ENCODE measurements at regions of chr10 and their contacts with region 1.

Region 1: GRCh38 chr10:103192451-103193106 is 493 bp downstream of the NT5C2 start:
- DNase-seq: peak; percentile 93 to 94
- ATAC-seq: peak; percentile 85
- H3K4me3 ChIP-seq: peak overlapping the region; percentile 80 to 93
- H3K27ac ChIP-seq: peak overlapping the region; percentile 98
- H3K4me1 ChIP-seq: peaks cover 0 to 2% of the 10 kb centered on the region in 2 donors
- H3K27me3 ChIP-seq: no peaks in the 10 kb centered on the region

Region 2: DNA sequence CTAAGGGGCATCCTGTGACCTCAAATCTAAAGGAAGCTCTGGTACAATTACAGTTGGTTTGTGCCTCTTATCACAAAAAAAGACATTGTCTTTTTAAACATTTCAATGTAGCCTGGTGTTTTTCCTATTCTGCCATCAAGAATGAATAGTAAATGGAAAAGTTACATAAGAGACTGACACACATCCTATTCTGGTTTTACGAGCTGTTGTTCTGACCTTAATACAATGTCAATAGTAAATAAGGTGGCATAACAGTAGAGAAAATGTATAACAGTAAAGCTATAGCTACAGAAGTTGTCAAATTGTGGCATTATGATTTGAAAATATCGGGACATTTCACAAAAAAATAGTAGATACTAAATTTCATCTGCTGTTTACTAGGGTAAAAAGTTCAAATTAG is 87.9 kb before region 1 on chr10:
- intact Hi-C with region 1: loop called in 1 of 2 experiments (anchors 5 kb)
- DNase-seq: no peak
- ATAC-seq: no peak
- H3K4me3 ChIP-seq: no peak overlapping the region
- H3K27ac ChIP-seq: no peak overlapping the region
- H3K4me1 ChIP-seq: no peaks in the 10 kb centered on the region
- H3K27me3 ChIP-seq: no peaks in the 10 kb centered on the region

Region 3: DNA sequence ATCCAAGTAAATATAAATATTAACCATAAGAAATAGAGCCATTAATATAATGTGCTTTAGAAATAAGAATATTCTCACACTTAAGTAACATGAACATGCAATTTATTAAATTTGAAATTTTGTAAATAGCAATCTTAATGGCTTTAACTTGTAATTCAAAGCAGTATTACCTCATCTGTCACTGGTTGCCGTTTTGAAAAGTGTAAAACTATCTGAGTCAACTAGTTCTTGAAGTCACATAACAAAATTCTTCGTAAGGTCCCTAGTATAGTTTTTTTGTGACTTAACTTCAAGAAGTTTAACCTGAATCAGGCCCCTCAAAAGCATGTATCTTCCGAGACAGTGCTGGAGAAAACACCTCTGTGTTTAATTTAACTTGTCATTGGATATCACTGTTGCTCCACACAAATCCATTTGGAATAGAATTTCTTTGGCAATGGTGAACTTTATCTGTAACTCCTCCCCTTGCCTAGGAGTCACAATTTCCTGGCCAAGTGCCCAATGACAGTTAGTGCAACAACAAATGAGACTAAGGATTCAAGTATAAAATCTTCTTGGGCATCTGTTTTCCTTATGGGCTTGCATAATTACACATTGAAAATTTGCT is 46.6 kb before region 1 on chr10:
- intact Hi-C with region 1: loop called in 1 of 2 experiments (anchors 5 kb)
- DNase-seq: peak; percentile 72 to 81
- ATAC-seq: peak; percentile 71
- H3K4me3 ChIP-seq: no peak overlapping the region
- H3K27ac ChIP-seq: no peak overlapping the region
- H3K4me1 ChIP-seq: peaks cover 5 to 7% of the 10 kb centered on the region in 2 donors
- H3K27me3 ChIP-seq: no peaks in the 10 kb centered on the region

Region 4: DNA sequence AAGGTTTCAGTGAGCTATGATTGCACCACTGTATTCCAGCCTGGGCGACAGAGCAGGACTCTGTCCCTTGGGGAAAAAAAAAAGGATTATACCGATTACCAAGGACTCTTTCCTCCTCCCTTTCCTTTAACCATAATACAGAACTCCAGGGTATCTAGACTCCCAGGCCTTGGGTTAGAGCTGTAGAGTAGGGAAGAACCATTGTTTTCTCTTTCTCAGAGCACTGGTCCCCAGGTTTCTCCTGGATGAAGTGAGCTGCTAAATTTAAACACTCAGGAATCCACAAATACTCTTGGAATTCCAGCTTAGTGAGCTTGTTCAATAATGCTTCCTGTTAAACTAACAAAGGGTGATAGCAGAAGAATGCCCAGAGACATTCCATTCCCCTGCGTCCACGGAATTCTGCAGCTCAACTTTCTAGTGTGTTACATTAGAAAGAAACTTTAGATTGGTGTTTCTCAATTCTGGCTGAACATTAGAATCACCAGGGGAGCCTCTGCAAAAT is 38.5 kb after region 1 on chr10:
- intact Hi-C with region 1: loop called (anchors 2 to 5 kb)
- DNase-seq: no peak
- ATAC-seq: peak; percentile 46
- H3K4me3 ChIP-seq: no peak overlapping the region
- H3K27ac ChIP-seq: peak overlapping the region; percentile 47 to 91
- H3K4me1 ChIP-seq: peaks cover 9 to 12% of the 10 kb centered on the region in 2 donors
- H3K27me3 ChIP-seq: no peaks in the 10 kb centered on the region

Measured in aorta (tissue), 5 donors.